Activated CD4-positive, alpha-beta memory T cell treated with anti-CD3 and anti-CD28 coated beads, Interleukin-2, amount 10 ng/mL, durations not matched to agents 7 days and 5 days (primary cell): ENCODE measurements at regions of chr1 and their contacts with region 1.

Region 1: GRCh38 chr1:206612129-206612876 is at the start of gene EIF2D:
- DNase-seq: peak; percentile 96
- H3K4me3 Mint-ChIP-seq: peak within 1 kb of the TSS; percentile 94
- H3K27ac Mint-ChIP-seq: peak within 1 kb of the TSS; percentile 81
- H3K4me1 Mint-ChIP-seq: peaks cover 41% of the 10 kb centered on the region
- H3K27me3 Mint-ChIP-seq: peaks cover 12% of the 10 kb centered on the region
- total RNA-seq, gene EIF2D: 42.2 to 43.1 TPM

Region 2: DNA sequence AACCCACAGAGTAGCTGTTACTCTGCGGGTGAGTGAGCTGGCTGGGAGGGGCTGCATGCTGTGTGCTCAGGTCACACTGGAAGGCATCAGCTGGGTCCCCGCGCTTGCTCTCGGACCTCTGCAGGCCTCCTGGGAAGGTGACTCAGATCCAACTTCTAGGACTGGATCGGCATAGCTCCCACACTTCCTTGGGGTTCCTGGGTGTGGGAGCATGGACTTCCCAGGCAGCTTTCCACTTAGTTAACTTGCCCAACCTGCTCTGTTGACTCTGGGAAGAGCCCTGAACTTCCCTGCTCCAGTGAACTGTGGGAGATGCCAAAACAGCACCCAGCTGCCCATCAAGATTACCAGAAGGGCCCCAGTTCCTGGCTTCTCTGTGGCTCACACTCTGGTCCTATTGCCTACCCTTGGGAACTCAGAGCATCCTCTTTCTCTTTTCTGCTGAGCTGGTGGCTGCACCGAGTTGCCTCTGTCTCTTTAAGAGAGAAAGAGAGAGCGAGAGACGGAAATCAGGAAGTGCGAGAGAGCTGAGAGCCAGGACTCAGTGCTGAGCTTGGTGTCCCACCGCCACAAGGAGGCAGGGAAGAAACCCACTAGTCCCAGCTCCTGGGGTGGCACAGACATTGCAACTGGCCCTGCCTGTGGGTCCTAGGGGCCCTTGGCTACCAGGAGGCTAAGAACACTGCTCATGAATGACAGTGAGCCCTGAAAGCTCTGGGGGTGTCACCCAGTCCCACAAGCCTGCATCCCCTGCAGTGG is 142.2 kb before region 1 on chr1 and contains the start of gene IKBKE:
- CTCF ChIA-PET with region 1: interaction called, 17 read pairs
- POLR2A ChIA-PET with region 1: interaction called, 5 read pairs
- DNase-seq: peak; percentile 72
- H3K4me3 Mint-ChIP-seq: peak within 1 kb of the TSS; percentile 93
- H3K27ac Mint-ChIP-seq: peak within 1 kb of the TSS; percentile 77
- H3K4me1 Mint-ChIP-seq: peaks cover 86% of the 10 kb centered on the region
- H3K27me3 Mint-ChIP-seq: no peaks in the 10 kb centered on the region
- total RNA-seq, gene IKBKE: 61.8 to 63.6 TPM

Region 3: GRCh38 chr1:206544562-206545257 is 67.6 kb before region 1 on chr1:
- CTCF ChIA-PET with region 1: interaction called, 22 read pairs
- POLR2A ChIA-PET with region 1: interaction called, 3 read pairs
- DNase-seq: peak; percentile 83
- H3K4me3 Mint-ChIP-seq: no peak overlapping the region
- H3K27ac Mint-ChIP-seq: no peak overlapping the region
- H3K4me1 Mint-ChIP-seq: peaks cover 17% of the 10 kb centered on the region
- H3K27me3 Mint-ChIP-seq: no peaks in the 10 kb centered on the region

Region 4: GRCh38 chr1:206575165-206575893 is 37.0 kb before region 1 on chr1:
- CTCF ChIA-PET with region 1: interaction called, 11 read pairs
- POLR2A ChIA-PET with region 1: interaction called, 11 read pairs
- DNase-seq: peak; percentile 72
- H3K4me3 Mint-ChIP-seq: peak overlapping the region; percentile 56
- H3K27ac Mint-ChIP-seq: peak overlapping the region; percentile 90
- H3K4me1 Mint-ChIP-seq: peaks cover 99% of the 10 kb centered on the region
- H3K27me3 Mint-ChIP-seq: no peaks in the 10 kb centered on the region

Region 5: GRCh38 chr1:206590025-206590758 is 22.1 kb before region 1 on chr1:
- CTCF ChIA-PET with region 1: interaction called, 13 read pairs
- POLR2A ChIA-PET with region 1: interaction called, 3 read pairs
- DNase-seq: peak; percentile 80
- H3K4me3 Mint-ChIP-seq: peak overlapping the region; percentile 55
- H3K27ac Mint-ChIP-seq: peak overlapping the region; percentile 98
- H3K4me1 Mint-ChIP-seq: peaks cover 68% of the 10 kb centered on the region
- H3K27me3 Mint-ChIP-seq: no peaks in the 10 kb centered on the region

Region 6: GRCh38 chr1:206635080-206635977 is 23.0 kb after region 1 on chr1 and contains the start of gene DYRK3:
- CTCF ChIA-PET with region 1: interaction called, 42 read pairs
- POLR2A ChIA-PET with region 1: interaction called, 21 read pairs
- DNase-seq: peak; percentile 95
- H3K4me3 Mint-ChIP-seq: peak within 1 kb of the TSS; percentile 80
- H3K27ac Mint-ChIP-seq: peak within 1 kb of the TSS; percentile 80
- H3K4me1 Mint-ChIP-seq: peaks cover 36% of the 10 kb centered on the region
- H3K27me3 Mint-ChIP-seq: peaks cover 23% of the 10 kb centered on the region
- total RNA-seq, gene DYRK3: 8.8 to 9.2 TPM

Region 7: DNA sequence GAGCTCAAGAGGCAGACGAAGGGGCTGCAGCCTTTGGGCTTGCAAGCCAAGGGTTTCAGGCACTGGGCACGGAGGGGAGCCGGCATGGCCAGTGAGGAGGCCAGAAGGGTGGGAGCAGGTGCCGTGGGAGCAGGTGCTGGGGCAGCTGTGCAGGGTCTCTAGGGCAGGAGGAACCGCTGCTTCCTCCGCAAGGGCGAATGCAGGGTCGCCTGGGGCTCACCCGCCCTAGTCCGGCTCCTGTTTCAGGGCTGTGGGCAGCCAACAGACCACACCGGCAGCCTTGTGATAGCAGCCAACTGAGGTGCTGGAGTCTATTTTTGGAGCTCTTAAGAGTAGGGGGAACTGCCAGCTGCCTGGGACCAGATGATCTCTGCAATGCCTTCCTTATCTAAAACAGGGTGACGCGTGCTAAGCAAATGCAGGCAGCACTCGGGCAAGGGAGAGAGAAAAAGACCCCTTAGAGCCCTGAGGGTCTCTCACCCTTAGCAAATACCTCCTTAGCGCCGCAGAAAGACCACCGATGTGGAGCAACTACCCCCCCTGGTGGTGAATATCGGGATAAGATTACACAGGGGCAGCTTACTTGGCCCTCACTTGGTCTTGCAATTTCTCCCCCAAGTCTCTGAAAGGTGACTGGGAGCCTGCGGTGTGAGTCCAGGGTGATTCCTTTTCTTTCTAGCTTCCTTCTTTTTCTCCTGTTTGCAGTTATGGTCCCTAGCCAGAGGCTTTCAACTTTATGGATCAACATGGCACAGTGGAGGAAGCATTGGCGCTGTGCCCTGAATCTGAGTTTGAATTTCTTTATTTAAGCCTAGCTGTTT is 51.7 kb after region 1 on chr1:
- CTCF ChIA-PET with region 1: interaction called, 50 read pairs
- POLR2A ChIA-PET with region 1: interaction called, 7 read pairs
- DNase-seq: peak; percentile 69
- H3K4me3 Mint-ChIP-seq: no peak overlapping the region
- H3K27ac Mint-ChIP-seq: no peak overlapping the region
- H3K4me1 Mint-ChIP-seq: peaks cover 29% of the 10 kb centered on the region
- H3K27me3 Mint-ChIP-seq: peaks cover 27% of the 10 kb centered on the region